Naive thymus-derived CD8-positive, alpha-beta T cell (primary cell): ENCODE measurements at regions of chr15 and their contacts with region 1.

Region 1: GRCh38 chr15:77409259-77410156 is 10.4 kb downstream of the PEAK1 start:
- DNase-seq: peak in 5 of 10 donors; percentile 5 to 65 (median 35)
- ATAC-seq: peak; percentile 82 to 99
- H3K4me3 Mint-ChIP-seq: peak overlapping the region; percentile 40 to 81 (median 74)
- H3K27ac Mint-ChIP-seq: peak overlapping the region; percentile 33 to 87 (median 73)
- H3K4me1 Mint-ChIP-seq: peaks cover 9 to 48% (median 22%) of the 10 kb centered on the region in 4 donors
- H3K27me3 Mint-ChIP-seq: no peaks in the 10 kb centered on the region

Region 2: DNA sequence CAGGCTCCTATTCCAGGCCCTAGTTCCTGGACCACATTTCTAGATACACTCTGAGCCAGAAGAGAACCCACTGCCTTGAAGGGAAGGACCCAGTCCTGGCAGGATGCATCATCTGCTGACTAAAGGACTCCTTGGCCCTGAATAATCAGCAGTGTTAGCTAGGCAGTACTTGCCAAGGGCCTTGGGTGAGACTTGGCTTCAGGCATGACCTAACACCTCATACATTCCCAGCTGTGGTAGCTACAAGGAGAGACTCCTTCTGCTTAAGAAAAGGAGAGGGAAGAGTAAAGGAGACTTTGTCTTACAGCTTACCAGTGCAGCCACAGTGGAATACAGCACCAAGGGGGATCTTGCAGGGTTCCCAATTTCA is 16.1 kb before region 1 on chr15:
- POLR2A ChIA-PET with region 1: no interaction called
- DNase-seq: no peak
- ATAC-seq: no peak
- H3K4me3 Mint-ChIP-seq: no peak overlapping the region
- H3K27ac Mint-ChIP-seq: no peak overlapping the region
- H3K4me1 Mint-ChIP-seq: peaks cover 0 to 6% (median 1%) of the 10 kb centered on the region in 4 donors
- H3K27me3 Mint-ChIP-seq: no peaks in the 10 kb centered on the region

Region 3: GRCh38 chr15:77419836-77420609 is 10.5 kb after region 1 on chr15 and contains the start of gene PEAK1:
- POLR2A ChIA-PET with region 1: interaction called, 16 read pairs
- DNase-seq: peak; percentile 98 to 100 (median 99)
- ATAC-seq: peak; percentile 93 to 98
- H3K4me3 Mint-ChIP-seq: peak within 1 kb of the TSS; percentile 94 to 100 (median 97)
- H3K27ac Mint-ChIP-seq: peak within 1 kb of the TSS; percentile 96 to 99 (median 98)
- H3K4me1 Mint-ChIP-seq: peaks cover 19 to 55% (median 43%) of the 10 kb centered on the region in 4 donors
- H3K27me3 Mint-ChIP-seq: no peaks in the 10 kb centered on the region
- polyA plus RNA-seq, gene PEAK1: 1.0 to 2.8 (median 1.6) TPM